HEK293T (cell line): ENCODE measurements at regions of chr14 and their contacts with region 1.

Region 1: GRCh38 chr14:94801225-94801624 is 31.3 kb upstream of the GSC start:
- DNase-seq: no peak

Region 2: DNA sequence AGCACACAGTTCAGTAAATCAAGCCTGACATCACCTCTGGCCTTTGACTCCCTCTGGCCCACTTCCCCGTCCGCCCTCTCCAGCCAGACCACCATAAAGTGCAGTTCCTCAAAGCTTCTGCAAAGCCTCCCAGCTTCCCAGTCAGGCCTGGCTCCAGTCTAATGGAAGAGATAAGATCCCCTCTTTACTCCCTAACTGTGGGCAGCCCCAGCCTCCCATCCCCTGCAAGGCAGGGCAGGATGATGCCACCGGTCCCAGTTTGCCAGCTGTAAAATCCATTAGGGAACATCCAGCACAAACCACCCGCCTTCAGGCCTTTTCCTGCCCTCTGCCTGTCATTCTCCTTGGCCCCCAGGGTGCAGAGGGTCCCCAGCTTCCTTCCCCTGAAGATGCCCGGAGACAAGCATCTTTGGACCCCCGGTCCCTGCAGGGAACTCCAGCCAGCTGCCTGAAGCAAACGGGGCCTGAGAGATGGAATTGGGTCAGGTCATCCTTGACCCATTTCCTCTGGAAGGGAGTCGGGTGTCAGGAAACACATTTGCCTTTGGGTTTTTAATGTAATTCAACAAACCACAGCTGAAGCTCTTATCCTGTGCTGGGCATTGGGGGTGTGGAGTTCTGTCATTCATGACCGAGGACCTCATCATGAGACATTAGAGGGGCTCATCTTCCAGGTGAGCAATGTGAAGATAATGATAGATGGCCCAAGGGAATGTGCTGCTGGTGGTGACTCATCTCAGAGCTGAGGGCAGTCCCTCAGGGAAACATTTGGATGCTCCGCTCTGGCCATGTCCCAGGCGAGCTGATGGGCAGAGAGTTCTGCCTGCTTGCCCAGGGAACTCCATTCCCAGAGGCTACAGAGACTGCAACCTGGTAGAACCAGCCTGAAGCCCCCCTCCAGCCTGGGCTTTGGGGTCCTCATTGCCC is 612.3 kb after region 1 on chr14:
- CTCF ChIA-PET with region 1: interaction called, 10 read pairs
- POLR2A ChIA-PET with region 1: no interaction called
- DNase-seq: no peak